Activated CD4-positive, alpha-beta T cell treated with anti-CD3 and anti-CD28 coated beads for 36 hours (primary cell): ENCODE measurements at regions of chr2 and their contacts with region 1.

Region 1: GRCh38 chr2:162890690-162891311 is 52.2 kb upstream of the KCNH7 start:
- DNase-seq: peak; percentile 25
- ATAC-seq: no peak
- H3K4me3 Mint-ChIP-seq: no peak overlapping the region
- H3K27ac Mint-ChIP-seq: no peak overlapping the region
- H3K4me1 Mint-ChIP-seq: no peaks in the 10 kb centered on the region
- H3K27me3 Mint-ChIP-seq: no peaks in the 10 kb centered on the region

Region 2: DNA sequence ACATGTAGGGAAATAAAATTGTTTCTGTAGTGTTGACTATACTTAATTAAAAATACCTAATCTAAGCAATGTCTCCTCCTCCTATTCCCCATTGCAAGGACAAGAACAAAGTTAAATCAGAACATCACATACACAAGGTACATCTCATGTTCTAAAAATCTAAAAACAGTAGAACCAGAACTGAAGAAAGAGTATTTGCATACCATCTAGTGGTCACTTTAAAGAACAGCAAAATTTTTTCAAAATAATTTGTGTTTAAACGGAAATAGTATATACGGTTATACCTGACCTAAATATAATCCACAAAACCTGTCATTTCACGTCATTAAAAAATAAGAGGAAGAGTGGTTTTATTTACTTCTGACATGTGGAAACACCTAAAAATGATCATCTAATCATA is 242.0 kb after region 1 on chr2:
- CTCF ChIA-PET with region 1: no interaction called
- POLR2A ChIA-PET with region 1: no interaction called
- intact Hi-C with region 1: loop called (anchors 1 to 5 kb)
- DNase-seq: no peak
- ATAC-seq: no peak
- H3K4me3 Mint-ChIP-seq: no peak overlapping the region
- H3K27ac Mint-ChIP-seq: no peak overlapping the region
- H3K4me1 Mint-ChIP-seq: no peaks in the 10 kb centered on the region
- H3K27me3 Mint-ChIP-seq: no peaks in the 10 kb centered on the region